Posterior cingulate gyrus (tissue), 11 donors: ENCODE measurements at regions of chr7 and their contacts with region 1.

Region 1: GRCh38 chr7:158325530-158326381 is 261.9 kb downstream of the PTPRN2 start:
- DNase-seq: peak in 8 of 10 donors; percentile 47 to 94 (median 58)

Region 2: DNA sequence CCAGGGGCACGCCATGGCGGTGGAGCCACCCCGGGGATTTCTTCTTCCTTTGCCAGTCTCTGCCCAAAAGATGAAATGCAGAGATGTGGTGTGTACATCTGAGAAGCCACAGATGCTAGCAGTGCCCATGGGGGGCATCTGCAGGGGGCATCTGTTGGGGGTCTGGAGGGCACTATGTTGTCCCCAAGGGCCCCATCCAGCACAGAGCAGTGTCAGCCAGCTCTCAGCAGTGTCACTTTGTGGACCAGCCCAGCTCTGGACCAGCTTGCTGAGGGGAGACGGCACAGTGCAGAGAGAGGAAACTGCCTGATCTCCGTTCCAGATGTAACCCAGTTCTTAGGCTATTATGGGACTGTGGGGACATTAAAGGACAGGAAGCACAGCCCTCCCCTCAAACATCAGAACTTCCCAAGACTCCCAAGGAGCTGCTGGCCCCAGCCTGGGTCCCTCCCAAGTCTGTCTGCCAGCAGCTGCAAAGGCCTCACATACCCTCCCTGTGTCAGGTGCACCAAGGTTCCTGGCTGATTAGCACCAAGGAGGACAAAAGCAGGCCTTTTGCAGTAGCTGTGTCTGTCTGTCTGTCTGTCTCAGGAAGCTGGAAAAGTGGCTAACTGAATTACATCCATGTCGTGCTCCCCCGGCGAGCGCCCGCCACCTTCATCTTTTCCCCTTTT is 274.6 kb before region 1 on chr7:
- intact Hi-C with region 1: loop called (anchors 10 kb)
- DNase-seq: peak in 2 of 10 donors; percentile 62 to 79

Region 3: DNA sequence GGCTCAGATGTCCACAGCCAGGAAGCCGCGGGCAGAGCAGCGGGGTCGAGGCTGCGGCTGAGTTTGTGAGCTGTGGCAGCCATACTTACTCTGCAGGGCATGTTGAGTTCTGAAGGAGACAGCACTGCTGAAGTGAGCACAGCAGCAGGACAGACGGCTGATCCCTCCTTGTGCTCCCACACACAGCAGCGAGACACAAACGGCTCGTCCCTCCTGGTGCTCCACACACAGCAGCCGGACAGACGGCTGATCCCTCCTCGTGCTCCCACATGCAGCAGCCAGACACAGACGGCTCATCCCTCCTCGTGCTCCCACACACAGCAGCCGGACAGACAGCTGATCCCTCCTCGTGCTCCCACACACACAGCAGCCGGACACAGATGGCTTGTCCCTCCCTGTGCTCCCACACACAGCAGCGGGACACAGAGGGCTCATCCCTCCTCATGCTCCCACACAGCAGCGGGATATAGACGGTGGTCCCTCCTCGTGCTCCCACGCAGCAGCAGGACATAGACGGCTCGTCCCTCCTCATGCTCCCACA is 43.2 kb before region 1 on chr7:
- intact Hi-C with region 1: no loop called
- DNase-seq: peak in 6 of 10 donors; percentile 15 to 91 (median 38)